Left colon (tissue), 2 donors: ENCODE measurements at regions of chr3 and their contacts with region 1.

Region 1: DNA sequence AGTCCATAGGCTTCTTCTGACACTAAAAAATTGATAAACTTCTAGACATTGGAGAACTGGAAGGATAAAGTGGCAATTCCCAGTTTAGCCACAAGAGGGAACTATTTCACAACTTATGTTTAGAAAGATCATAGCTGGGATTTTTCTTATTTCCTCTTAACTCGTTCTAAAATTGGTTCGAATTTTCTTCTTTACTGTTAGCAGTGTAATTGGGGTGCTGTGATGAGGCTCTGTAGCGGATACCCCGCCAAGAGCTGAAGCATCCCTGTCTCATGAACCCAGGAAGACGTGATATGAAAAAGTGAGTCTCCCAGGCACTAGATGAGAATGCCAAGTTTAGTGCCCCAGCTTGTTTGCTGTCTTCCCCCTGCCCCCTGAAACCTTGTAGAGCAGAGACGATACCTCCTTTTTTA is 85.1 kb downstream of the PDCD6IP start:
- DNase-seq: no peak
- ATAC-seq: peak; percentile 50

Region 2: GRCh38 chr3:34683851-34684250 is 800.3 kb after region 1 on chr3:
- intact Hi-C with region 1: loop called in 1 of 2 experiments (anchors 5 kb)
- DNase-seq: peak; percentile 36 to 85
- ATAC-seq: peak; percentile 68